Endothelial cell of umbilical vein (primary cell): ENCODE measurements at regions of chr14 and their contacts with region 1.

Region 1: DNA sequence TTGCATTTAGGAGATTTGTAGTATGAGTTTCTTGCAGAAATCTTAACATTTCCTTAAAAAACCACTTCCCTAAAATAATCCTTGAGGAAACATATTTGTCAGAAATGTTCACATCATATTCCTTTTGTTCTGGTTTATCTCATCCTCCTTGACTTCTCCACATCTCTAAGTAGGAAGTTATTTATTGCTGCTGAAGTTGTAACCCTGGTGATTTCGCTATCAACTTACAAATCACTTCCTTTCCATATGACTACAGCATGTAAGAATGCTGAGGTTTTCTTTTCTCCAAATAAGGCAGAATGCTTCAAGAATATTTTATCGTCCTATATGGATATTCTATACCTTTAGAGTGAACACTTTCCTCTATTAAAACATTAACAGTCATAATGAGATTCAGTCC is 751.7 kb downstream of the NRXN3 start:
- DNase-seq: peak; percentile 92
- H3K4me3 ChIP-seq: peak overlapping the region in 1 of 3 experiments; percentile 19
- H3K27ac ChIP-seq: peak overlapping the region; percentile 82
- H3K4me1 ChIP-seq: peaks cover 33% of the 10 kb centered on the region
- H3K27me3 ChIP-seq: no peaks in the 10 kb centered on the region
- CTCF ChIP-seq: no peak
- POLR2A ChIP-seq: peak; percentile 61

Region 2: GRCh38 chr14:78863143-78863542 is 58.7 kb before region 1 on chr14:
- CTCF ChIA-PET with region 1: no interaction called
- POLR2A ChIA-PET with region 1: no interaction called
- dilution Hi-C with region 1: no loop called
- intact Hi-C with region 1: no loop called
- DNase-seq: peak; percentile 48
- H3K4me3 ChIP-seq: no peak overlapping the region
- H3K27ac ChIP-seq: no peak overlapping the region
- H3K4me1 ChIP-seq: no peaks in the 10 kb centered on the region
- H3K27me3 ChIP-seq: no peaks in the 10 kb centered on the region
- CTCF ChIP-seq: no peak
- POLR2A ChIP-seq: no peak

Region 3: GRCh38 chr14:78950649-78951048 is 28.8 kb after region 1 on chr14:
- CTCF ChIA-PET with region 1: interaction called, 4 read pairs
- POLR2A ChIA-PET with region 1: no interaction called
- dilution Hi-C with region 1: no loop called
- intact Hi-C with region 1: loop called (anchors 1 kb)
- DNase-seq: peak; percentile 74
- H3K4me3 ChIP-seq: no peak overlapping the region
- H3K27ac ChIP-seq: peak overlapping the region; percentile 52
- H3K4me1 ChIP-seq: peaks cover 14% of the 10 kb centered on the region
- H3K27me3 ChIP-seq: no peaks in the 10 kb centered on the region
- CTCF ChIP-seq: no peak
- POLR2A ChIP-seq: no peak

Region 4: DNA sequence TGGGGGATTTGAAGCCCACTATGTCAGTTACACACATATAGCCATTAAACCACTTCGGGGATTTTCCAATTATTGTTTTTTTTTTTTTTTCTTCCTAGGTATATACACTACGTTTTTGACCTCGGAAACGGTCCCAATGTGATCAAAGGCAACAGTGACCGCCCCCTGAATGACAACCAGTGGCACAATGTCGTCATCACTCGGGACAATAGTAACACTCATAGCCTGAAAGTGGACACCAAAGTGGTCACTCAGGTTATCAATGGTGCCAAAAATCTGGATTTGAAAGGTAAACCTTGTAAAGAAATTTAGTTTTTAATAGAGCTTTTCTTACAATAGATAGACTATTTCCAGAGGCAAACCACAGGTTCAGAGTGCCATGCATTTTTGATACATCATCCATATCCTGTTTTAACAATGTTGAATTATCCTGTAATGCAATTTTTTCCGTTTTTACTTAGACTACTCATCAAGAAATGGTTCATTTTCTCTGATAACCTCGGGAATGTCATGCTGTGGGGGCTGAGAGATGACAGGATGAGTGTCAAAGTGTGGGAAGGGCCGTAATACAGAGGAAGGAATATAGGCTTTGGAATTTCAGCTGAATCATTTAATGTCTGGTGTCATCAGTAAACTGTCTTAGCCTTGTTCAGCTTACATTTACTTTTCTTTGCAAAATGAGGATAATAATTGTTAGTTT is 45.4 kb after region 1 on chr14:
- CTCF ChIA-PET with region 1: no interaction called
- POLR2A ChIA-PET with region 1: no interaction called
- dilution Hi-C with region 1: no loop called
- intact Hi-C with region 1: loop called (anchors 2 kb)
- DNase-seq: peak; percentile 56
- H3K4me3 ChIP-seq: no peak overlapping the region
- H3K27ac ChIP-seq: peak overlapping the region; percentile 60
- H3K4me1 ChIP-seq: peaks cover 33% of the 10 kb centered on the region
- H3K27me3 ChIP-seq: no peaks in the 10 kb centered on the region
- CTCF ChIP-seq: no peak
- POLR2A ChIP-seq: no peak

Region 5: DNA sequence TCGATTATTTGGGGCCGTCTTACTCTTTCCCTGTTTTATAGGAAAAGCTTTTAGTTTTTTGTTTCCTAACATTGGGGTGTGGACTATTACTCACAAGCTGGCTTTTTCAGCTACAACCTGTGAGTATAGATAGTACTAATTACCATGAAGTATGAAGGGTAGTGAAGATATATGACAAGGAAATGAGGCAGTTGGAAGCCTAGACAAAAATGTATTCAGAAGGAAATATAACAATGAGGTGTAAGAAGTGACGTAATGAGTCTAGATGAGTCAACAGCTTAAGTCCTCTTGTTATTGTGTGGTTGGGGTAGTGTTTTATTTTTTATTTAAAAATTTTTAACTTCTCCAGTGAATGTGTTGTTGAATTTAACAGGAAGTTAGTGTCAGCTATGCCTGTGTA is 52.8 kb after region 1 on chr14:
- CTCF ChIA-PET with region 1: no interaction called
- POLR2A ChIA-PET with region 1: no interaction called
- dilution Hi-C with region 1: no loop called
- intact Hi-C with region 1: loop called (anchors 1 kb)
- DNase-seq: peak; percentile 88
- H3K4me3 ChIP-seq: no peak overlapping the region
- H3K27ac ChIP-seq: peak overlapping the region; percentile 84
- H3K4me1 ChIP-seq: peaks cover 25% of the 10 kb centered on the region
- H3K27me3 ChIP-seq: no peaks in the 10 kb centered on the region
- CTCF ChIP-seq: no peak
- POLR2A ChIP-seq: no peak

Region 6: DNA sequence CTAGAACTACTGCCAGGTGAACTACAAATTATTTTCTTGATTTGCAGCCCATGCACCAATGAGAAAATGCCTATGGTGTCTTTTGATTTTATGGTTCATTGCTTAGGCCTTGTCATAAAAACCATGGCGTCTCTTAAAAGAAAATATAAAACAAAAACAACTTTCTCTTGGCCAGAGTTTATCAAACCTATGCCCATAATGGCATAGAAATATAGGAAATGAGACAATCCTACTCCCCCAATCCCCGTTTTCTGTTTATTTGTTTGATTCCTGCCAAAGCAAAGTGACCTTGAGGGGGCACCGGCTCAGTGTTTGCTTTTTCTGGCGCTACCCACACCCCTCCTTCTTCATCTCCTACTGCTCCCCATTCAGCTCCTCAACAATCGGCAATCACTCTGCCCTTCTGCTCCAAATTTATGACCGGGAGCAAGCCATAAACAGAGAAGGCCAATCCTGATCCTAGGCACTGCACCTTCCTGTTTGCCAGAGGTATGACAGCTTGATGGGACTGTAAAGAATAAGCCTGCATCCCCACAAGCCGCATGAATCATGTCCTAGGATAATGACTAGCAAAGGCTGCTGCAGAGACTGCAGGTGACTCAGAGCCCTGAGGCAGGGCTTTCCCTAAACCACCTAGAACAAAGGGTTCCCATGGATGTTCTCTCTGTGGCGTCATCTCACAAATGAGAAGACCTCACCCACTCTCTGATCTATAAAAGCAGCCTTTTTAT is 123.2 kb after region 1 on chr14:
- CTCF ChIA-PET with region 1: no interaction called
- POLR2A ChIA-PET with region 1: no interaction called
- dilution Hi-C with region 1: no loop called
- intact Hi-C with region 1: loop called (anchors 2 kb)
- DNase-seq: peak; percentile 86
- H3K4me3 ChIP-seq: peak overlapping the region in 1 of 3 experiments; percentile 18
- H3K27ac ChIP-seq: peak overlapping the region; percentile 82
- H3K4me1 ChIP-seq: peaks cover 14% of the 10 kb centered on the region
- H3K27me3 ChIP-seq: no peaks in the 10 kb centered on the region
- CTCF ChIP-seq: no peak
- POLR2A ChIP-seq: no peak

Region 7: DNA sequence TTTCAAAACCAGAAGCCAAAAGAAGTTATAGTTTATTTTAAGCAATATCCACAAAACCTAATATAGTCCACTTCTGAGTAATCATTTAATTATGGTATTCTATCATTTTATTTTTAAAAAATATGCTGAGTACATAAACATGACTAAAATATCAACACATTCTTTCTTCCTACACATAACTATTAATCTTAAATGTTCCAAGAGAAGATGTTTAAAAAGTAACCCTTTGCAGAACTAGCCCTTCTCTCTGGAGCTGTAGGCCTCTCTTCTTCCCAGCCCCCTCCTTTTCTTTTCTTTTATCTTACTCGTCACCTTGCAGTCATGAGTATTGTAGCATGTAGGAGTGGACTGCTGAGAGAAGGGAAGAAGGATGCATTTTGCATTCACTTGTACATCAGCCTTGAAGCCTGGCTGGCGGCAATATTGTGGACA is 190.1 kb after region 1 on chr14:
- CTCF ChIA-PET with region 1: no interaction called
- POLR2A ChIA-PET with region 1: no interaction called
- dilution Hi-C with region 1: no loop called
- intact Hi-C with region 1: no loop called
- DNase-seq: no peak
- H3K4me3 ChIP-seq: no peak overlapping the region
- H3K27ac ChIP-seq: no peak overlapping the region
- H3K4me1 ChIP-seq: no peaks in the 10 kb centered on the region
- H3K27me3 ChIP-seq: no peaks in the 10 kb centered on the region
- CTCF ChIP-seq: no peak
- POLR2A ChIP-seq: no peak